Caco-2 (cell line): ENCODE measurements at regions of chr10 and their contacts with region 1.

Region 1: DNA sequence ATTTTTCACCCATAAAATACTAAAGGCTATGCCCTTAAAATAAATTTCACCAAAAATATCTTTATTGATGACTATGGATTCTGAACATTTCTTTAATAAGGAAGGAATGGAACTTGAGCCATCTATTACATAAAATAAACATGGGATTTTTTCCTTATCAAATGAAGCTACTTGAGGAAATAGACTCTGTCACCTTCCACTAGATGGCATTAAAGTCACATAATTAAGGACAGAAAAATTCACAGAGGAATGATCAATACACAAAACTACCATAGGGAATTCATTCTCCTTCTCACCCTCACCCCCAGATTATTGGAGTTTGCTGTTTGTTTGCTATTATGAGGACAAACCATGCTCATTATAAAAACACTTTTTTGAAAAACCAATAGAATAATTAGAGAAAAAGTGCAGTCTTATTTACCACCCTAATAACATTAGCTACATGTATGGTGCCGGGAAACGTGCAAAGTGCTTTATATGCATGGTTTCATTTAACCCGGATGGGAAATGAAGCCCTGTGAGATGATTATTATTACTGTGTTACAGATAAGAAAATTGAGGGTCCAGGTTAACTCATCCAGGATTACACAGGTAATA is 21.1 kb upstream of the FOXI2 start:
- DNase-seq: peak in 1 of 2 experiments; percentile 20
- H3K4me3 ChIP-seq: no peak overlapping the region
- H3K4me3 Mint-ChIP-seq: no peak overlapping the region
- H3K27ac Mint-ChIP-seq: no peak overlapping the region
- H3K4me1 ChIP-seq: no peaks in the 10 kb centered on the region
- H3K4me1 Mint-ChIP-seq: no peaks in the 10 kb centered on the region
- H3K27me3 ChIP-seq: no peaks in the 10 kb centered on the region
- H3K27me3 Mint-ChIP-seq: no peaks in the 10 kb centered on the region
- CTCF ChIP-seq: peak; percentile 28 to 54

Region 2: DNA sequence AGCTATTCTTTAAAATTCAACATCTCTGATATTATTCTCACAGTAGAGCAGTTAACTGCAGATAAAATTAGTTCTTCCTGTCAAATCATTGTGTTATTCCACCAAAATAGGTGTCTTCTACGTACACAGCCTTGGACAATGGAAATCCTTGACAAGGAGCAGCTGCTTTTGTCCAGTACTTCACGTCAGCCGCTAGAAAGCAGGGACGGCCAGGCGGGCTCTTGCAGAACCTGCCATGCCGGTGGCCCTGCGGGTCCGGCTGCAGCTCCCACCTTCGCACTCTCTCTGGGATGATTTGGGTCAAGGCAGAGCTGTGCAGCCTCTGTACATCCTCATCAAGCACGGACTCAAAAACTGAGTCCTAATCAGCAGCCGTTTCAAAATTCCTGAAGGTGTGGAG is 18.9 kb after region 1 on chr10:
- CTCF ChIA-PET with region 1: no interaction called
- POLR2A ChIA-PET with region 1: no interaction called
- intact Hi-C with region 1: no loop called
- DNase-seq: no peak
- H3K4me3 ChIP-seq: no peak overlapping the region
- H3K4me3 Mint-ChIP-seq: no peak overlapping the region
- H3K27ac Mint-ChIP-seq: no peak overlapping the region
- H3K4me1 ChIP-seq: no peaks in the 10 kb centered on the region
- H3K4me1 Mint-ChIP-seq: no peaks in the 10 kb centered on the region
- H3K27me3 ChIP-seq: no peaks in the 10 kb centered on the region
- H3K27me3 Mint-ChIP-seq: peaks cover 11% of the 10 kb centered on the region
- CTCF ChIP-seq: no peak

Region 3: GRCh38 chr10:127813290-127813689 is 97.4 kb after region 1 on chr10:
- CTCF ChIA-PET with region 1: interaction called, 6 read pairs
- POLR2A ChIA-PET with region 1: no interaction called
- intact Hi-C with region 1: loop called (anchors 1 kb)
- DNase-seq: no peak
- H3K4me3 ChIP-seq: no peak overlapping the region
- H3K4me3 Mint-ChIP-seq: no peak overlapping the region
- H3K27ac Mint-ChIP-seq: no peak overlapping the region
- H3K4me1 ChIP-seq: no peaks in the 10 kb centered on the region
- H3K4me1 Mint-ChIP-seq: no peaks in the 10 kb centered on the region
- H3K27me3 ChIP-seq: no peaks in the 10 kb centered on the region
- H3K27me3 Mint-ChIP-seq: peaks cover 2% of the 10 kb centered on the region
- CTCF ChIP-seq: peak in 1 of 2 experiments; percentile 21

Region 4: GRCh38 chr10:127853868-127854768 is 138.2 kb after region 1 on chr10:
- CTCF ChIA-PET with region 1: interaction called, 22 read pairs
- POLR2A ChIA-PET with region 1: no interaction called
- intact Hi-C with region 1: loop called (anchors 1 kb)
- DNase-seq: peak; percentile 49 to 57
- H3K4me3 ChIP-seq: no peak overlapping the region
- H3K4me3 Mint-ChIP-seq: no peak overlapping the region
- H3K27ac Mint-ChIP-seq: no peak overlapping the region
- H3K4me1 ChIP-seq: 0 out of 2 replicates have a peak, but pooled peaks cover 3% of the 10 kb centered on the region
- H3K4me1 Mint-ChIP-seq: no peaks in the 10 kb centered on the region
- H3K27me3 ChIP-seq: no peaks in the 10 kb centered on the region; the same call in 1 of the 2 replicates
- H3K27me3 Mint-ChIP-seq: peaks cover 8% of the 10 kb centered on the region
- CTCF ChIP-seq: peak; percentile 68 to 83

Region 5: DNA sequence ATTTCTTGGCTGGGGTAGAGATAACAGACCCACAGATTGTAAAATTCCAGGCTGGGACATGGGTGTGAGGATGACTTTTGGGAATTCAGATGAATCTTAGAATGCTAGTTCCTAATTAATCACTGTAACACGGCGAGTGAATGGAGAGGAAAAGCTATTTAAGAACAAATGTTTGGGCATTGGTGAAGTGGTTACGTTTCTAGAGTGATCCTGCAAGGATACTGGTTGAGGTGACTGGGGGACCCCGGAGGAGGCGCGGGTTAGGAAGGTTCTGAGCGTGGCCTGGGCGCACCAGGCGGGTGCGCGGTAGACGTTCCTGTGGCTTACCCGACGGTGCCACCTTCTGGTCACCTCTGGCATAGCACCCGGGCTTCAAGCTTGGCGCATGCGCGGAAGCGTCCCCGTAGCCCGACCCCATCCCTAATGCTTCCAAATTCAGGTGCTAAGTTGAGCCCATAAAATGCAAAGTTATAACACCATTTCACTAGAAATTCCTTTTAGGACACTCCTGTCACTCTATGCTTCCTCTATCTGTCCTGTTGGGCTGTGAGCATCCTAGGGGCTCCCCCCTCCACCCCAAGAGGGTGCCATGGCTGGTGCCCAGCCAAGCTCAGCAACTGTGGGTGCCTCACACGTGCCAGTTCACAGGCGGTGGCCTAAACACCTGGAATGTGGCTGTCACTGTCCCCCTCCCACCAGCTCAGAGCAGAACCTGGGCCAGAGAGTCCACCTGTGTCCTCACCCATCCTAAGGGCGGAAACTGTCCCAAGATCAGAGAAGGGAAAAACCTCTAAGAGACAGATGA is 295.5 kb after region 1 on chr10:
- CTCF ChIA-PET with region 1: interaction called, 4 read pairs
- POLR2A ChIA-PET with region 1: no interaction called
- intact Hi-C with region 1: loop called (anchors 5 kb)
- DNase-seq: peak; percentile 71 to 90
- H3K4me3 ChIP-seq: no peak overlapping the region
- H3K4me3 Mint-ChIP-seq: no peak overlapping the region
- H3K27ac Mint-ChIP-seq: no peak overlapping the region
- H3K4me1 ChIP-seq: no peaks in the 10 kb centered on the region
- H3K4me1 Mint-ChIP-seq: no peaks in the 10 kb centered on the region
- H3K27me3 ChIP-seq: peaks cover 2% of the 10 kb centered on the region
- H3K27me3 Mint-ChIP-seq: no peaks in the 10 kb centered on the region
- CTCF ChIP-seq: peak; percentile 95 to 98